MCF 10A (cell line): ENCODE measurements at regions of chr9 and their contacts with region 1.

Region 1: GRCh38 chr9:94277885-94278536 is 18.9 kb downstream of the ZNF169 start:
- DNase-seq: no peak
- H3K4me3 Mint-ChIP-seq: no peak overlapping the region
- H3K27ac Mint-ChIP-seq: peak overlapping the region; percentile 88
- H3K4me1 Mint-ChIP-seq: peaks cover 11% of the 10 kb centered on the region
- H3K27me3 Mint-ChIP-seq: no peaks in the 10 kb centered on the region
- CTCF ChIP-seq: no peak

Region 2: DNA sequence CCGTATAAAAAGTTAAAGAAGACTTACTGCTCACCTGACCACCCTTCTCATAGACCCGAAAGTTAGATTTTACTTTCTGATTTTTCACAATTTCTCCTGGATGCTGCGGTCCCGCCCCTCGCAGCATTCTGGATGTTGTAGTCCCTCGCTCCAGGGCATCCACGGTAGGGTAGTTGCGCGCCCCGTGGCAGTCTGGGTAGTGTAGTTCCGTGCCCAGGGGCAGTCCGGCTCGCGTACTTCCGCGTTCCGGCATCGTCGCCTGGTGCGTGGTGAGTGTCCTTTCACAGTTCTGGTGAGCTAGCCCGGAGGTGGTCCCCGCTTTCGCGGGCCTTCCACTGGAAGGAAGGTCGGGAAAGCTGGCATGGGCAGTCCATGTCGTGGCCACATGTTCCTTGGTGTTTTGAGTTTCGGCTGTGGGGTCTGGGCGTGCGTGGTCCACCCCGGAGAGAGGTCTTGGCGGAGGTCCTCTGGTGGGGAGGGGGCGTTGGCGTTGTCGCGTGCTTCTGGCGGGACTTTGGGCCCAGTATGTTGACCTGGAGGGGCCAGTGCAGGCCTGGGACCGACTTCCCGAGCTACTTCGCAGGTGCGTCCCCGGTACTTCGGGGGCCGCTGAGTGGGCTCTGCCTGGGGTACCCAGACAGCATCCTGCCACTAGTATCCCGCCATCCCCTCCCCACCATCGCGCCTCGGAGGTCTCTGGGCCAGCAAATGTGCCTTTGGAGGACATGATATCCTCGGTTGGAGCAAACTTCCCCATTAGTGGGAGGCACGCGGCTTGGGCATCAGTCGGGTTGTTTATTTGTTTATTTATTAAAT is 18.7 kb before region 1 on chr9 and contains the start of gene ZNF169:
- CTCF ChIA-PET with region 1: no interaction called
- POLR2A ChIA-PET with region 1: interaction called, 3 read pairs
- intact Hi-C with region 1: loop called (anchors 2 kb)
- DNase-seq: peak; percentile 87
- H3K4me3 Mint-ChIP-seq: peak within 1 kb of the TSS; percentile 100
- H3K27ac Mint-ChIP-seq: peak within 1 kb of the TSS; percentile 94
- H3K4me1 Mint-ChIP-seq: peaks cover 4% of the 10 kb centered on the region
- H3K27me3 Mint-ChIP-seq: peaks cover 27% of the 10 kb centered on the region
- CTCF ChIP-seq: no peak
- total RNA-seq, gene ZNF169: 3.9 and 4.6 TPM in 2 replicates